ENCODE measurements at regions of chr3 and their contacts with region 1.

Region 1: DNA sequence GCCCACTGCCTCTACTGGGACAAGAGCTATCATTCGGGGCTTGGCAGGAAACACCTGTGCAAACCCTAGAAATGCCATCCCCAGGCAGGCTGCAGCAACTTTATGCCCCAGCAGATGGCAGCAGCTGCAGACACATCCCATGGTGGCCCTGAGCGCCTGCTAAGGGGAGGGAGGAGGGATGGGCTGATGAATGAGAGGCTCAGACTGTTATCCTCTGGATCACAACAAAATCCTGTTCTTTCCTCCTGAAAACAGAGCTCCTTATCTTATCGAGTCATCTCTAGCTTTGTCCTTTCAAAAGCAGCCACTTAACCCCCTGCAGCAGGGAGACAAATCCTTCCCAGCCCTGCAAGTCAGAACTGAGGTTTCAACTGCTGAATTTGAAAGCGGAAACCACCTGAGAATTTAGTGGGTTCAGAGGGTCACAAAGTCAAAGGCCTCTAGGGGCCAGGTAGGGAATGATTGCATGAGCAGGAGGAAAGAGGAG is 90.6 kb upstream of the PROK2 start:
- DNase-seq: peak; percentile 59 to 85 (median 76)
- ATAC-seq: peak; percentile 80 to 96 (median 91)
- H3K4me3 ChIP-seq: no peak overlapping the region
- H3K27ac ChIP-seq: no peak overlapping the region
- H3K4me1 ChIP-seq: peaks cover 0 to 8% (median 0%) of the 10 kb centered on the region in 12 donors
- H3K27me3 ChIP-seq: peaks cover 0 to 9% (median 0%) of the 10 kb centered on the region in 9 donors
- CTCF ChIP-seq: peak; percentile 77 to 90 (median 85)
- POLR2A ChIP-seq: no peak

Region 2: DNA sequence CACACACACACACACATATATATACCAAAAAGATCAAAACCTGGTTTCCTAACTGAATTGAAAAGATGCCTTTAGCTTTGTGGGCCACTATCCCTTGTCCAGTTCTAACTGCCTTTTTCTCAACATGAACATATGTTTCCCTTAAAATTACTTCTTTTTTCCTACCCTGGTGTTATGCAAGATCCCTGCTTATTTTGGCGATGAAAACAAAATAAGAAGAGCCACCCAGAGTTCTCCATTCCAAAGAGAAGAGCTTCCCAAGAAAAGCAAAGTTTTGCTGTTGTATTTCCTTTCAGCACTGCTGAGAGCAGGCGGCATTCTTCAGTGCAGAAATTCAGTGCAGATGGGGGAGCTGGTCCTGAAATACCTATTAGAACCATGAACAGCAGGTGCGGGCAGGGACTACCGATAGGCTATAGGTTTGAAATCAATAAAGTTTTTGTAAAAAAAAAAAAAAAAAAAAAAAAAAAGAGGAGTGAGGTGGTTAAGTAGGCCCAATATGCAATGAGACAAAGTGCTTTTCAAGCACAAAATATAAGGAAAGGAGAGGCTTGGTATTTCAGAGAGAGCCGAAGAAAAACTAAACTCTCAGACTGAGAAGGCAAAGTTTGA is 530.0 kb before region 1 on chr3:
- intact Hi-C with region 1: no loop called
- DNase-seq: peak in 2 of 5 donors; percentile 11 to 42
- ATAC-seq: peak; percentile 32 to 84 (median 80)
- H3K4me3 ChIP-seq: no peak overlapping the region
- H3K27ac ChIP-seq: peak overlapping the region in 4 of 12 donors; percentile 12 to 49 (median 36)
- H3K4me1 ChIP-seq: peaks cover 0 to 15% (median 0%) of the 10 kb centered on the region in 12 donors
- H3K27me3 ChIP-seq: no peaks in the 10 kb centered on the region
- CTCF ChIP-seq: no peak
- POLR2A ChIP-seq: no peak

Region 3: DNA sequence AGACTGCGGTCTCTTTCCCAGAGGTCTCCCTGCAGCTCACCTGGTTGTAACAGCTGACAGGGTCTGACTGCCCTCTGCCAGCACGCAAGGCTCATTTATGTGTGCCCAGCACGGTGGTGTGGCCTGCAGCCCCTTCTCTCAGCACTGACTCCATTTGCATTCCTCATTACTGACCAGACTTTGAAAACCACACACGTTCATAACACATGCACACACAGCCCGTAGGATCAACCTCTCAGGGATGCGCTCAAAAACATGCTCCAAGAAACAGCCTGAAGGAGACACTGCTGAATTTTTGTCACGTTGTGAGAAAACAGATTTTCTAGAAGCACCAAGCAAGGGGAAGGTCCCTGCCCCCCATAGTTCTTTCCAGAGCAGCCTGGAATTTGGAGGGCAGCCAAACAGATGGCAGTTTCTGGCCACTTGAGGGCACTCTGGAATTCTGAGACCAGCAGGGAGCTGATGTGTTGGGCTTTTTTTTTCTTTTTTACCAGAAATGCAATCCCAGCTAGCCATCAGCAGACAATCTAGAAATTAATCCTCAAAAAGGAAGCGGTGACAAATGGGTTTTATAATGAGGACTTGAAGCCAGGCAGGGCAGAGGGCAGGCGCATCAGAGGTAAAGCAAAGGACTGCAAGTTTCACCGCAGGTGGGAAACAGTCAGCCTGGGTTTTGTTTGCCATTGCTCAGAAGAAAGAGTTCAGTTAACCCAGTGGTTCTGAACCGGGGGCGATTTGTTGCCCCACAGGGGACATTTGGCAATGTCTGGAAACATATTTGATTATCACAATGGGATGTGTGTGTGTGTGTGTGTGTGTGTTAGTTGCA is 80.0 kb after region 1 on chr3:
- intact Hi-C with region 1: loop called in 4 of 10 experiments (anchors 5 to 10 kb)
- DNase-seq: peak; percentile 62 to 75 (median 72)
- ATAC-seq: peak in 3 of 4 donors; percentile 62 to 76 (median 76)
- H3K4me3 ChIP-seq: no peak overlapping the region
- H3K27ac ChIP-seq: no peak overlapping the region
- H3K4me1 ChIP-seq: peaks cover 0 to 10% (median 5%) of the 10 kb centered on the region in 12 donors
- H3K27me3 ChIP-seq: peaks cover 0 to 8% (median 0%) of the 10 kb centered on the region in 9 donors
- CTCF ChIP-seq: peak; percentile 49 to 84 (median 74)
- POLR2A ChIP-seq: no peak

Region 4: DNA sequence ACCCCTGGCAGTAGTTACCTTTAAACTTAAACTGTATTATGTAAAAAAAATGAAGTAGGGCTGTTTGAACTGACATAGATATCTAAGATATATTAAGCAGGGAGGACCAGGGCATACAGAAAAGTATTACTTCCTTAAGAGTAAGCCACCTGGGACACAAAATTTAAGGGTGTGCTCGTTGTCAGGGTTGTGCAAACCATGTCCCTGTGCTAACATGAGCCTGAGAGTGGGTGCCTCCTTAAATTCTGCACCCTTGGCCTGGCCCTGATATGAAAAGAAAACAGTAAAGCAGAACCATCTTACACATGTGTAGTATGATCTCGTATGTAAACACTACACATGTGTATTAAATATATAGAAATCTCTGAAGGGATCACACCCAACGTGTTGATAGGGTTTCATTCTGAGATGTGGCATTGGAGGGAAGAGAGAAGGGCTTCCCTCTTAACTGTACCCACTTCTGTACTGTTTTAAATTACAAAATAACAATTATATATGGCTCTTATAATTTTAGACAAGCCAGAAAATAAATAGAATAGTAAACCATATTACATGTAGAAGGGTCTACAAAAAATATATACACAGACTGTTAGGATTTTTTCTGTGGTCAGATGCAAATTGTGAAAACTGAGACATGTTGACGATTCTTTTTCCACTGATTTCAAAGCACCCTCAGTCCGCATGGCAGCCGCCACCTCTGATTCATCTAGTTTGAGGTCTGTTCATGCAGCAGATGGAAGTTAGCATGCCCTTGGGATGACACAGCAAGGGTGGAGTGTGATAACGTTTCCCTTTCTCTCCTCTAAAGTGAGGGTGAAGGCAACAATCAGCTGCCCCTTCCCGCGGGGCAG is 310.3 kb after region 1 on chr3:
- intact Hi-C with region 1: no loop called
- DNase-seq: no peak
- ATAC-seq: peak in 1 of 4 donors; percentile 13
- H3K4me3 ChIP-seq: no peak overlapping the region
- H3K27ac ChIP-seq: no peak overlapping the region
- H3K4me1 ChIP-seq: peaks cover 0 to 14% (median 0%) of the 10 kb centered on the region in 12 donors
- H3K27me3 ChIP-seq: peaks cover 0 to 3% (median 0%) of the 10 kb centered on the region in 9 donors
- CTCF ChIP-seq: no peak
- POLR2A ChIP-seq: no peak

Region 5: DNA sequence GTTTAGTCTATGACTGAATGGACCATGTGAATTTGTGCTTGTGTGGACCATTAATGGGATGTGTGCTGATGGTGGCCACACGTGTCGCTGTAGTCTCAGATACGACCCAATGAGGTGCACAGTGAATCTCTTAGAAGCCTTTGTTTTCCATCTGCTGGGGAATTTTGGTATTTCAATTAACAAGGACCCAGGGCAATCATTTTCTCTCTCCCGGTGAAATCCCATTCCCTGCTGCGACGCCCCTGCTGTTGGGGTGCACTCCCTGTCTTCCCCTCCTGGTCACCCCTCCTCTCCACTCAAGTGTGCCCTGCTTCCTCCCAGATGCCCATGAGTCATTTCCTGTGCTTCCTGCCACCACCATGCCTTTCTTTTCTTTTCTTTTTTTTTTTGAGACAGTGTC is 1218.6 kb after region 1 on chr3:
- intact Hi-C with region 1: loop called in 6 of 10 experiments (anchors 5 to 10 kb)
- DNase-seq: no peak
- ATAC-seq: no peak
- H3K4me3 ChIP-seq: no peak overlapping the region
- H3K27ac ChIP-seq: no peak overlapping the region
- H3K4me1 ChIP-seq: peaks cover 0 to 15% (median 0%) of the 10 kb centered on the region in 12 donors
- H3K27me3 ChIP-seq: no peaks in the 10 kb centered on the region
- CTCF ChIP-seq: no peak
- POLR2A ChIP-seq: no peak

Measured in heart left ventricle (tissue), 16 donors.